CD8-positive, alpha-beta T cell (primary cell): ENCODE measurements at regions of chr10 and their contacts with region 1.

Region 1: GRCh38 chr10:69408318-69409175 is 8.2 kb downstream of the TACR2 start:
- DNase-seq: peak; percentile 77 to 97 (median 89)
- ATAC-seq: peak; percentile 88
- H3K4me3 ChIP-seq: peak overlapping the region; percentile 37 to 49
- H3K4me3 Mint-ChIP-seq: peak overlapping the region; percentile 49
- H3K27ac ChIP-seq: peak overlapping the region; percentile 72 to 75
- H3K27ac Mint-ChIP-seq: peak overlapping the region; percentile 94
- H3K4me1 ChIP-seq: peaks cover 18% of the 10 kb centered on the region
- H3K4me1 Mint-ChIP-seq: peaks cover 20% of the 10 kb centered on the region
- H3K27me3 ChIP-seq: no peaks in the 10 kb centered on the region
- H3K27me3 Mint-ChIP-seq: no peaks in the 10 kb centered on the region
- CTCF ChIP-seq: peak; percentile 72

Region 2: GRCh38 chr10:69123747-69124562 is 284.6 kb before region 1 on chr10 and contains the start of gene VPS26A:
- CTCF ChIA-PET with region 1: no interaction called
- POLR2A ChIA-PET with region 1: no interaction called
- intact Hi-C with region 1: loop called (anchors 1 kb)
- DNase-seq: peak; percentile 95 to 99 (median 98)
- ATAC-seq: peak; percentile 97
- H3K4me3 ChIP-seq: peak within 1 kb of the TSS; percentile 88 to 90
- H3K4me3 Mint-ChIP-seq: peak within 1 kb of the TSS; percentile 94
- H3K27ac ChIP-seq: peak within 1 kb of the TSS; percentile 94
- H3K27ac Mint-ChIP-seq: peak within 1 kb of the TSS; percentile 97
- H3K4me1 ChIP-seq: peaks cover 27% of the 10 kb centered on the region
- H3K4me1 Mint-ChIP-seq: peaks cover 30% of the 10 kb centered on the region
- H3K27me3 ChIP-seq: no peaks in the 10 kb centered on the region
- H3K27me3 Mint-ChIP-seq: no peaks in the 10 kb centered on the region
- CTCF ChIP-seq: peak; percentile 54
- total RNA-seq, gene VPS26A: 48.6 to 50.3 TPM

Region 3: GRCh38 chr10:69392481-69393000 is 16.0 kb before region 1 on chr10:
- CTCF ChIA-PET with region 1: interaction called, 21 read pairs
- POLR2A ChIA-PET with region 1: interaction called, 5 read pairs
- intact Hi-C with region 1: loop called in 1 of 2 experiments (anchors 1 kb)
- DNase-seq: peak; percentile 64 to 90 (median 81)
- ATAC-seq: peak; percentile 100
- H3K4me3 ChIP-seq: no peak overlapping the region
- H3K4me3 Mint-ChIP-seq: no peak overlapping the region
- H3K27ac ChIP-seq: peak overlapping the region in 1 of 2 experiments; percentile 24
- H3K27ac Mint-ChIP-seq: peak overlapping the region; percentile 62
- H3K4me1 ChIP-seq: peaks cover 5% of the 10 kb centered on the region
- H3K4me1 Mint-ChIP-seq: peaks cover 19% of the 10 kb centered on the region
- H3K27me3 ChIP-seq: no peaks in the 10 kb centered on the region
- H3K27me3 Mint-ChIP-seq: no peaks in the 10 kb centered on the region
- CTCF ChIP-seq: peak; percentile 87

Region 4: GRCh38 chr10:69451209-69451783 is 42.7 kb after region 1 on chr10 and contains the start of gene TSPAN15:
- CTCF ChIA-PET with region 1: interaction called, 3 read pairs
- POLR2A ChIA-PET with region 1: no interaction called
- intact Hi-C with region 1: loop called (anchors 1 to 2 kb)
- DNase-seq: peak; percentile 43 to 87 (median 79)
- ATAC-seq: peak; percentile 89
- H3K4me3 ChIP-seq: peak within 1 kb of the TSS; percentile 58 to 75
- H3K4me3 Mint-ChIP-seq: peak within 1 kb of the TSS; percentile 83
- H3K27ac ChIP-seq: no peak within 1 kb of the TSS
- H3K27ac Mint-ChIP-seq: no peak within 1 kb of the TSS
- H3K4me1 ChIP-seq: peaks cover 5% of the 10 kb centered on the region
- H3K4me1 Mint-ChIP-seq: peaks cover 17% of the 10 kb centered on the region
- H3K27me3 ChIP-seq: no peaks in the 10 kb centered on the region
- H3K27me3 Mint-ChIP-seq: no peaks in the 10 kb centered on the region
- CTCF ChIP-seq: no peak
- total RNA-seq, gene TSPAN15: 1.9 to 2.6 TPM

Region 5: DNA sequence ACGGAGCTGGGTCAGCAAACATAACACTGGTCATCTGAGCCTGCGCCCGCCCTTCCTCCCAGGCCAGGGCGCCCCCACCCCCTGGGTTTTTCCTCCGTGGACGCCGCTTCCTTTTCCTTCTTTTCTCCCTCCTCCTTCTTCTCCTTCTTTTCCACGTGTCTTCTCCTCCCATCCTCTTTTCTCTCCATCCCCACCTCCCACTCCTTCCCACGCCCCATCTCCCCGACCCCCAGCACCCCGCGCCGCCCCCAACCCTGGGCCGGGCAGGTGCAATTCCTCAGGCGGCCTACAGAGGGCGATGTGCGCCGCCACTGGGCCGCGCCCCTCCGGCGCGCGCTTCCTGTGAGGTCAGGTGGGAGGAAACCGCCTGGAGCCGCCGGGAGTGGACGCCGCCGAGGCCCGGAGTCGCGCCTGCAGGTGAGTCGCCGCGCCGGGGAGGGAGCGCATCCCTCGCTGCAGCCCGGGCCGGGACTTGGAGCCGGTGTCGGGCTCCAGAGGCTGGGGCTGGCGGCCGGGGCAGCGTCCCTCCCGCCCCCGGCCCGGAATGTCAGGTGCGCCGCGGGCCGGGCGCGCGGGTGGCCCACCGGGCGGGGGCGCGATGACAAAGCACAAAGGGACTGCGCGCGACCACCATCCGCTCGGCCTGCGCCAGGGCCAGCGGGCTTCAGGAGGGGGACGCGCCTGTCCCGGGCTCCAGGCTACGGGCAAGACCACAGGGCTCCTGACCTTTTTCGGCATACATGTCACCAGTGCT is 221.5 kb after region 1 on chr10 and contains the start of gene FAM241B:
- CTCF ChIA-PET with region 1: interaction called, 3 read pairs
- POLR2A ChIA-PET with region 1: no interaction called
- intact Hi-C with region 1: loop called in 1 of 2 experiments (anchors 2 kb)
- DNase-seq: peak; percentile 40 to 86 (median 75)
- ATAC-seq: peak; percentile 99
- H3K4me3 ChIP-seq: peak within 1 kb of the TSS; percentile 48 to 83
- H3K4me3 Mint-ChIP-seq: peak within 1 kb of the TSS; percentile 76
- H3K27ac ChIP-seq: peak within 1 kb of the TSS in 1 of 2 experiments; percentile 37
- H3K27ac Mint-ChIP-seq: peak within 1 kb of the TSS; percentile 70
- H3K4me1 ChIP-seq: peaks cover 21% of the 10 kb centered on the region
- H3K4me1 Mint-ChIP-seq: peaks cover 24% of the 10 kb centered on the region
- H3K27me3 ChIP-seq: no peaks in the 10 kb centered on the region
- H3K27me3 Mint-ChIP-seq: no peaks in the 10 kb centered on the region
- CTCF ChIP-seq: peak; percentile 100
- total RNA-seq, gene FAM241B: 7.4 to 9.1 TPM

Region 6: GRCh38 chr10:70478191-70479164 is 1069.9 kb after region 1 on chr10 and contains the start of gene PALD1:
- CTCF ChIA-PET with region 1: no interaction called
- POLR2A ChIA-PET with region 1: no interaction called
- intact Hi-C with region 1: loop called in 1 of 2 experiments (anchors 10 kb)
- DNase-seq: peak in 3 of 9 experiments; percentile 30 to 56 (median 45)
- ATAC-seq: peak; percentile 19
- H3K4me3 ChIP-seq: peak within 1 kb of the TSS; percentile 47 to 48
- H3K4me3 Mint-ChIP-seq: peak within 1 kb of the TSS; percentile 80
- H3K27ac ChIP-seq: no peak within 1 kb of the TSS
- H3K27ac Mint-ChIP-seq: no peak within 1 kb of the TSS
- H3K4me1 ChIP-seq: peaks cover 43% of the 10 kb centered on the region
- H3K4me1 Mint-ChIP-seq: peaks cover 45% of the 10 kb centered on the region
- H3K27me3 ChIP-seq: no peaks in the 10 kb centered on the region
- H3K27me3 Mint-ChIP-seq: peaks cover 2% of the 10 kb centered on the region
- CTCF ChIP-seq: no peak
- total RNA-seq, gene PALD1: 0.08 TPM in 1 of 2 experiments, not detected in the other